ENCODE measurements at regions of chr16 and their contacts with region 1.

Region 1: DNA sequence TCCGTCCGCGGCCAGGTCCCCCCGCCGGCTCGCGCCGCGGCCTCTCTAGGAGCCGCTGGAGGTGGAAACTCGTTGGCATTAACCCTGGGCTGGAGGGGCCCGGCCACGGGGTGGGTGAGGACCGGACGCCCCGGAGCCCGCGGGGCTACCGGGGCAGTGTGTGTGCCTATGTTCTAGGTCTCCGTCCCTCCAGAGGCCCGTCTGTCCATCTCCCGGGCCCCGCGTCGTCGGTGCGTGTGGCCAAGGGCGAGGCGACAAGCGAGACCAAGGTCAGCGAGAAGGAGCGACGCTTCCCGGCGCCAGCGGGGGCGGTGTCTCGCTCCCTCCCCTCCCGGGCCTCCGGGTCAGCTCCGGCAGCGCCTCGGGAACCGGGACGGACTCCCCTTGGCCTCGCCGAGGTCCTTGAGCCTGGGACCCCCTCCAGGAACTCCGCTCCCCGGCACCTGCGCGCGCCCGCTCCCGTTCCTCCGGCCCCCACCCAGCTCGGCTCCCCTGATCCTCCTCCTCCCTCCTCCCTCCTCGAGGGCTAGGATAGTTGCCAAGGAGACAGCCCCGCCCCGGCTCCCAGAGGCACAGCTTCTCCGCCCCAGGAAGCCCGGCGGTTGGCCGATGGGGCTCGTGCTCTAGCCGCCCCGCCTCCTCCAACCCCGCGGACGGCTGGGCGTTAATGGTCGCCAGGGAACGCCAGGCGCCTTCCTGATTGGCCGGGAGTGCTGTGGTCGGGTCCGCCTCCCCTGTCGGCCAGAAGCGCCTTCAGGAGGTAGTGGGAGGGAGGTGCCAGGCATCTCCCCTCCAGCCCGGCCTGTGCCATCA is 663 bp upstream of the ZNF768 start:
- DNase-seq: peak; percentile 99
- H3K4me3 ChIP-seq: peak overlapping the region; percentile 86
- H3K27ac ChIP-seq: peak overlapping the region; percentile 95
- H3K4me1 ChIP-seq: peaks cover 12% of the 10 kb centered on the region
- H3K27me3 ChIP-seq: no peaks in the 10 kb centered on the region
- CTCF ChIP-seq: peak; percentile 33; the same call in 1 of the 2 replicates

Region 2: DNA sequence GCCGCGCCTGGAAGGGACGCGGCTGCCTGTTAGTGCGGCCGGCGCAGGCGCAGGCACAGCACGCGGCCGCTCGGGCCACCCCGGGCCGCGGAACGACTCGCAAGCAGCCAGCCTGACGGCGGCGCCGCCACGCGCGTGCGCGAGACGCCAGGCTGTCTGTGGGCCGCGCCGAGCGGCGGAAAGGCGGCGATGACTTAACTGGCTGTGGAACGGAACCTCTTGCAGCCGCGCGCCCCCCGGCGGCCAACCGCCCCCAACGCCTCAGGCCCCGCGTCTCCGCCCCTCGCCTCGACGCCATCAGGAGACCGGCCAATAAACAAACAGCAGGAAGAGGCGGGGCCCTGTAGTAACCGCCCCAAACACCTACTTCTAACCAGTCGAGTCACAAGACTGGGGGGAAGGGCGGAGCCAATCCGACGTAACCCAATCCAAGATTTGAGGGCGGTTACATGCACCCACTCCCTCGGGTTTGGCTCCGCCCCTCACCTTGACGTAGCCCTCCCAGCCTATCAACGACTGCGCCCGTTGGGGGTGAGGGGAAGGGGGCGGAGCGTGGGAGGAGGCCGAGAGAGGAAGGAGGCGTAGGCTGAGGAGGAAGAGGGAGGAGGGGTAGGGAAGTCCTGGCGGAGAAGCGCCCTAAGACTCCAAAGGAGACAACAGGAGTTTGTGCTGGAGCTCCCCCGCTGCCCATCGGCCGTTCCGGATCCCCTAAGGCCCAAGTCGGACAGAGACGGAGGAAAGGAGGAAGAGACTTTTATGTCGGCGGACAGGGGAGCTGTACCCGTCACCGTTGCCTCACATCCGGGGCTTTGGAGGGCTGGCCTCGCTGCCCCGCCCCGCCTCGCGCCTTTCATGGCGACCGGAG is 131.1 kb after region 1 on chr16 and contains the start of gene FBRS:
- CTCF ChIA-PET with region 1: no interaction called
- POLR2A ChIA-PET with region 1: no interaction called
- intact Hi-C with region 1: loop called (anchors 1 kb)
- DNase-seq: peak; percentile 100
- H3K4me3 ChIP-seq: peak within 1 kb of the TSS; percentile 81
- H3K27ac ChIP-seq: peak within 1 kb of the TSS; percentile 99
- H3K4me1 ChIP-seq: peaks cover 19% of the 10 kb centered on the region
- H3K27me3 ChIP-seq: no peaks in the 10 kb centered on the region
- CTCF ChIP-seq: peak; percentile 94
- total RNA-seq, gene FBRS: 71.2 and 79.9 TPM in 2 replicates

Measured in A673 (cell line).